Right ventricle myocardium inferior (tissue), 1 donor: ENCODE measurements at regions of chr1 and their contacts with region 1.

Region 1: GRCh38 chr1:159891275-159892157 is 8.4 kb downstream of the CFAP45 start:
- DNase-seq: peak; percentile 89
- ATAC-seq: peak; percentile 89

Region 2: GRCh38 chr1:159780583-159781582 is 110.6 kb before region 1 on chr1 and contains the start of gene DUSP23:
- intact Hi-C with region 1: loop called (anchors 1 kb)
- DNase-seq: peak; percentile 99
- ATAC-seq: peak; percentile 99
- total RNA-seq, gene DUSP23: 21.3 TPM

Region 3: GRCh38 chr1:159798893-159799292 is 92.6 kb before region 1 on chr1:
- intact Hi-C with region 1: loop called (anchors 1 kb)
- DNase-seq: no peak
- ATAC-seq: peak; percentile 83

Region 4: GRCh38 chr1:159854693-159855192 is 36.8 kb before region 1 on chr1:
- intact Hi-C with region 1: loop called (anchors 2 kb)
- DNase-seq: peak; percentile 94
- ATAC-seq: peak; percentile 98

Region 5: DNA sequence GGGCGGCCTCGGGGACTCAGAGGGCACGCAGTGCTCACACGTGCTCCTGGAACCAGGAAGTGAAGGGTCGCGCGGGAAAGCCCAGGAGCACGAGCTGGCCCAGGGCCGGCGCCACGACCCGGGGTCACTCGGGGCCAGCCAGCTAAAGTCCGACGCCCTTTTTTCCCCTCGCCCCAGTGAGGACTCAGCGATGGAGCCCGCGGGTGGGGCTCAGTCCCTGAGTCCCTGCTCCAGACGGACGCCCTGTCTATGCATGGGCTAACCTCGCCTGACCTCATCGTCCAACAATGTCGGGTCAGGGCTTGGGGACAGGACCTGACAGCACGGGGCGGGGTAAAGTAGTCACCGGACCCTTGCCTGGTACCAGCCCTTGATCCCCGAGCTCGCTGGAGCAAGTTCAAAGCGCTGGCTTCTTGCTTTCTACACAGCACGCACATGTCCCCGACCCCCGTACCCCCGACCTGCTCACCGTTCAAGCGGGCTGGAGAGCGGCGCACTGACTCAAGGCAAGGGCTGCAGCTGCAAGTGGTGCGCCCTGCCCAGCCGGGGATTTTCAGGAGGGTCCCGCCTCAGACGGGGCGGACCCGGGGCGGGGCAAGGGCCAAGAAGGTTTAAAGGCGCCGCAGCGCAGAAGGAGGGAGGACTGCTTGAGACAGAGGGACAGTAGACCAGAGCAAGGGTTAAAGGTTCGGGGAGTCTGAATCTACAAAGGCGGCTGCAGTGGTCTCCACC is 33.6 kb after region 1 on chr1 and contains the start of gene TAGLN2:
- intact Hi-C with region 1: loop called (anchors 5 kb)
- DNase-seq: peak; percentile 97
- ATAC-seq: peak; percentile 84
- total RNA-seq, gene TAGLN2: 143 TPM